CD4-positive, alpha-beta memory T cell (primary cell): ENCODE measurements at regions of chr3 and their contacts with region 1.

Region 1: DNA sequence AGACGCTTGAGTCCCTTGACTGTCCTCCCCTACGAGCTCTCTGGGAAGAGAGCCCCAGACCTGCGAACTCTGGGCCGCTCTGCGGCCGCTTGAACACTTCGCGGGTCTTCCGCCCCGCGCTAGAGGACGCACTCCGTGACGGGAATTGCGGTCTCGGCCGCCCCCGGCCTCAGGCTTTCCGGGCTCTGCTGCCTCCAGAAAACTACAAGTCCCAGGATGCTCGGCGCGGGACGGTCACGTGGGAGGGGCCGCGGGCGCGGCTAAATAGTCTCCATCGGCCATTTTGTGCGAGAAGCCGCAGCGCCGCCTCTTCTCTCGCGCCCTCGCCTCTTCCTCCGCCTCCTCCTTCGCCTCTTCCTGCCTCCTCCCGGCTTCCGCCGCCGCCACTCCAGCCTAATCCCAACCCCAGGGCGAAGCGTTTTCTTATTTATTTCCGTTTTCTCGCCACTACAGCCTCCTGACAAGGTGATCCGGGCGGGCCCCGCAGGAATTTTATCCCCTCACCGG is at the start of gene EIF1B:
- DNase-seq: peak; percentile 96 to 99 (median 98)
- H3K4me3 ChIP-seq: peak within 1 kb of the TSS; percentile 68 to 77
- H3K4me3 Mint-ChIP-seq: peak within 1 kb of the TSS; percentile 98 to 100 (median 100)
- H3K27ac ChIP-seq: peak within 1 kb of the TSS; percentile 95
- H3K27ac Mint-ChIP-seq: peak within 1 kb of the TSS; percentile 99 to 100 (median 100)
- H3K4me1 ChIP-seq: peaks cover 32% of the 10 kb centered on the region
- H3K4me1 Mint-ChIP-seq: peaks cover 13 to 48% (median 25%) of the 10 kb centered on the region in 4 donors
- H3K27me3 ChIP-seq: no peaks in the 10 kb centered on the region
- H3K27me3 Mint-ChIP-seq: no peaks in the 10 kb centered on the region
- total RNA-seq, gene EIF1B: 61.2 TPM

Region 2: DNA sequence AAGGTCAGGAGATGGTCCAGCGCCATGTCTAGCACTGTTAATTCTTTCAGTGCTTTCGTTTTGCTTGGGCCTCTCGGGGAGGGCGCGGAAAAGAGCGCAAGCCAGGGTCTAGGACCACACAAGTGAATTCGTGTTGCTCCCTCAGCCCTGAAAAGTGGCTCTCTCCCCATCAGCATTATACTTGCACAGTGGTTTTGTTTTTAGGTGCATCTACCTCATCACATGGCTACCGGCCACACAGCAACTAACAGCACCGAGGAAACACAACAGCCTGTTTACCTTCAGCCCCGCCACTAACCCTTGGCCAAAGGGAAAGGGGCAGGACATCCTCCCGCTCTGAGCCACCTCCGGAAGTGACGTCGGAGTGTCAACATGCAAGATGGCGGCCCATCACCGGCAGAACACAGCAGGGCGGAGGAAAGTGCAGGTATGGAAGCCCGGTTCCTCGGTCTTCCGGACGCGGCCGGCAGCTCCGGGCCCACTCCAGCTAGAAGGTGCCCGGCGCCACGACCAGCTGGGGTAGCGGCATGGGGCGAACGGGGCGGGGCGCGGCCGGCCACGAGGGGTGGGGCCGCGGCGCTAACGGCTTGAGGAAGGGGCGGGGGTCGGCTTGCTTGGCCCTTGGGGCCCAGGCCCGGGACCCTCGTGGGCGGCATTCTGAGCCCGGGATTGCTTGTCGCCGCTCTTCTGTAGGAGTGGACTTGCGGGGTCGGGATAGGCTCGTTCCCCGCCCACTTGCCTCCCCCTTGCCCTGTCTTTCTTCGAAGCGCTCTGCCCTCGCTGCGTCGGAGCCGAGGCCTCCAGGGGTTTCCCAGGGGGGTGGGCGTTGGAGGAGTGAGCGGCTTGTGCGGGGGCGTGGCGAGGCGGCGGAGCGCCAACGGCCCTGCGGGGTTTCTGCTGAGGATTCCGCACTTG is 1257.6 kb before region 1 on chr3 and contains the starts of genes SCN11A and WDR48:
- CTCF ChIA-PET with region 1: no interaction called
- POLR2A ChIA-PET with region 1: no interaction called
- intact Hi-C with region 1: loop called (anchors 2 kb)
- DNase-seq: peak; percentile 89 to 97 (median 92)
- H3K4me3 ChIP-seq: peak within 1 kb of the TSS; percentile 21 to 67
- H3K4me3 Mint-ChIP-seq: peak within 1 kb of the TSS; percentile 89 to 99 (median 97)
- H3K27ac ChIP-seq: peak within 1 kb of the TSS; percentile 94
- H3K27ac Mint-ChIP-seq: peak within 1 kb of the TSS; percentile 98 to 100 (median 98)
- H3K4me1 ChIP-seq: peaks cover 36% of the 10 kb centered on the region
- H3K4me1 Mint-ChIP-seq: peaks cover 50 to 86% (median 68%) of the 10 kb centered on the region in 4 donors
- H3K27me3 ChIP-seq: no peaks in the 10 kb centered on the region
- H3K27me3 Mint-ChIP-seq: peaks cover 0 to 1% of the 10 kb centered on the region in 2 donors
- total RNA-seq, gene SCN11A: 0.08 to 0.15 TPM
- total RNA-seq, gene WDR48: 59.4 to 69.8 TPM

Region 3: GRCh38 chr3:39406368-39407258 is 902.9 kb before region 1 on chr3 and contains the start of gene RPSA:
- CTCF ChIA-PET with region 1: no interaction called
- POLR2A ChIA-PET with region 1: no interaction called
- intact Hi-C with region 1: loop called (anchors 1 kb)
- DNase-seq: peak; percentile 91 to 99 (median 99)
- H3K4me3 ChIP-seq: peak within 1 kb of the TSS; percentile 31 to 72
- H3K4me3 Mint-ChIP-seq: peak within 1 kb of the TSS; percentile 88 to 99 (median 96)
- H3K27ac ChIP-seq: peak within 1 kb of the TSS; percentile 81
- H3K27ac Mint-ChIP-seq: peak within 1 kb of the TSS; percentile 88 to 99 (median 98)
- H3K4me1 ChIP-seq: peaks cover 47% of the 10 kb centered on the region
- H3K4me1 Mint-ChIP-seq: peaks cover 30 to 54% (median 43%) of the 10 kb centered on the region in 4 donors
- H3K27me3 ChIP-seq: no peaks in the 10 kb centered on the region
- H3K27me3 Mint-ChIP-seq: no peaks in the 10 kb centered on the region
- total RNA-seq, gene RPSA: 1,582 to 1,688 TPM

Region 4: GRCh38 chr3:40099871-40100270 is 209.6 kb before region 1 on chr3:
- CTCF ChIA-PET with region 1: no interaction called
- POLR2A ChIA-PET with region 1: no interaction called
- intact Hi-C with region 1: no loop called
- DNase-seq: no peak
- H3K4me3 ChIP-seq: no peak overlapping the region
- H3K4me3 Mint-ChIP-seq: no peak overlapping the region
- H3K27ac ChIP-seq: no peak overlapping the region
- H3K27ac Mint-ChIP-seq: no peak overlapping the region
- H3K4me1 ChIP-seq: no peaks in the 10 kb centered on the region
- H3K4me1 Mint-ChIP-seq: no peaks in the 10 kb centered on the region
- H3K27me3 ChIP-seq: no peaks in the 10 kb centered on the region
- H3K27me3 Mint-ChIP-seq: peaks cover 5 to 8% of the 10 kb centered on the region in 2 donors

Region 5: GRCh38 chr3:40267937-40268723 is 41.3 kb before region 1 on chr3:
- CTCF ChIA-PET with region 1: no interaction called
- POLR2A ChIA-PET with region 1: no interaction called
- intact Hi-C with region 1: no loop called
- DNase-seq: no peak
- H3K4me3 ChIP-seq: no peak overlapping the region
- H3K4me3 Mint-ChIP-seq: no peak overlapping the region
- H3K27ac ChIP-seq: no peak overlapping the region
- H3K27ac Mint-ChIP-seq: no peak overlapping the region
- H3K4me1 ChIP-seq: no peaks in the 10 kb centered on the region
- H3K4me1 Mint-ChIP-seq: peaks cover 0 to 4% (median 0%) of the 10 kb centered on the region in 4 donors
- H3K27me3 ChIP-seq: no peaks in the 10 kb centered on the region
- H3K27me3 Mint-ChIP-seq: no peaks in the 10 kb centered on the region

Region 6: DNA sequence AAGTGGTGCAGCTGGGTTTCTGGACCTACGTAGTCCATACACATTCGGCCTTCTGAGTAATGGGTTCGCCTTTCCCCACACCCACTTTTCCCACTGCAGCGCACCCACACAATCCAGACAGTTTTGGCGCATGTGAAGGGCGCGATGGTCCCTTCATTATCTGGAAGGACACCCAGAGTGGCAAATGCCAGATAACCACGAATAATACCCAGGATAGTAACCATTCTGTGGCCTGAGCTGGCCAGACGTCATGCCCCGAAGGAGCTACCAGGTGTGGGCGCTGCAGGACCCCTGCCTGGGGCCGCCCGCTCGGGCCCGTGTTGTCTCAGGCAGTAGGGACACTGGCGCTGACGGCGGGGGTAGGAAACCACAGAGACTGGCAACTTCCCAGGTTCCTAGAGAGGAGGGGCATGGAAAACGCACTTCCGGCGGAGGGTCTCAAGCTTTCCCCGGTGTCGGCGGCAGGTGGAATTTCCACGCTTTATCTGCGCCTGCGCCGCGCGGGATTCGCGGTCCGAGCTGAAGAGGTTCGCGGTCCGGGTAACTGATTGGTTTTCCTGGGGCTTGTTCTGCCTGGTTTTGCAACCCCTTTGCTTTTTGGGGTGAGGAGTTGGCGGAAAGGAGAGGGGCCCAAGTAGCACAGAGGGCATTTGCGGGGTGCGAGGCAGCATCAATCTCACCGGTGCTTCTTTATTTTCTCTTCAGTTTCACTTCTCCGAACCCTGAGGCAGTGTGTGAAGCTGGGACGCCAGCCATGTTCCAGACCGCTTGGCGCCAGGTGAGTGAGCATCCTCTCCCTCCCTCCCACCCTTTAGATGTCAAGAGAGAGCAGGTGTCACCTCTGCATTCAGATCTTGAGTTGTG is 196.4 kb after region 1 on chr3 and contains the start of gene ZNF620:
- CTCF ChIA-PET with region 1: interaction called, 6 read pairs
- POLR2A ChIA-PET with region 1: interaction called, 10 read pairs
- intact Hi-C with region 1: no loop called
- DNase-seq: peak; percentile 26 to 57 (median 34)
- H3K4me3 ChIP-seq: peak within 1 kb of the TSS; percentile 74 to 92
- H3K4me3 Mint-ChIP-seq: peak within 1 kb of the TSS; percentile 95 to 98 (median 97)
- H3K27ac ChIP-seq: peak within 1 kb of the TSS; percentile 44
- H3K27ac Mint-ChIP-seq: peak within 1 kb of the TSS; percentile 70 to 95 (median 92)
- H3K4me1 ChIP-seq: peaks cover 8% of the 10 kb centered on the region
- H3K4me1 Mint-ChIP-seq: peaks cover 8 to 21% (median 14%) of the 10 kb centered on the region in 4 donors
- H3K27me3 ChIP-seq: no peaks in the 10 kb centered on the region
- H3K27me3 Mint-ChIP-seq: no peaks in the 10 kb centered on the region
- total RNA-seq, gene ZNF620: 3.7 to 3.8 TPM

Region 7: GRCh38 chr3:41198950-41199865 is 889.7 kb after region 1 on chr3 and contains the start of gene CTNNB1:
- CTCF ChIA-PET with region 1: no interaction called
- POLR2A ChIA-PET with region 1: interaction called, 6 read pairs
- intact Hi-C with region 1: loop called (anchors 1 kb)
- DNase-seq: peak; percentile 90 to 92 (median 91)
- H3K4me3 ChIP-seq: peak within 1 kb of the TSS; percentile 83 to 89
- H3K4me3 Mint-ChIP-seq: peak within 1 kb of the TSS; percentile 94 to 99 (median 96)
- H3K27ac ChIP-seq: peak within 1 kb of the TSS; percentile 96
- H3K27ac Mint-ChIP-seq: peak within 1 kb of the TSS; percentile 91 to 98 (median 95)
- H3K4me1 ChIP-seq: peaks cover 41% of the 10 kb centered on the region
- H3K4me1 Mint-ChIP-seq: peaks cover 28 to 43% (median 35%) of the 10 kb centered on the region in 4 donors
- H3K27me3 ChIP-seq: no peaks in the 10 kb centered on the region
- H3K27me3 Mint-ChIP-seq: peaks cover under 1 to 1% of the 10 kb centered on the region in 2 donors
- total RNA-seq, gene CTNNB1: 175 to 176 TPM